ENCODE measurements at regions of chr16 and their contacts with region 1.

Region 1: DNA sequence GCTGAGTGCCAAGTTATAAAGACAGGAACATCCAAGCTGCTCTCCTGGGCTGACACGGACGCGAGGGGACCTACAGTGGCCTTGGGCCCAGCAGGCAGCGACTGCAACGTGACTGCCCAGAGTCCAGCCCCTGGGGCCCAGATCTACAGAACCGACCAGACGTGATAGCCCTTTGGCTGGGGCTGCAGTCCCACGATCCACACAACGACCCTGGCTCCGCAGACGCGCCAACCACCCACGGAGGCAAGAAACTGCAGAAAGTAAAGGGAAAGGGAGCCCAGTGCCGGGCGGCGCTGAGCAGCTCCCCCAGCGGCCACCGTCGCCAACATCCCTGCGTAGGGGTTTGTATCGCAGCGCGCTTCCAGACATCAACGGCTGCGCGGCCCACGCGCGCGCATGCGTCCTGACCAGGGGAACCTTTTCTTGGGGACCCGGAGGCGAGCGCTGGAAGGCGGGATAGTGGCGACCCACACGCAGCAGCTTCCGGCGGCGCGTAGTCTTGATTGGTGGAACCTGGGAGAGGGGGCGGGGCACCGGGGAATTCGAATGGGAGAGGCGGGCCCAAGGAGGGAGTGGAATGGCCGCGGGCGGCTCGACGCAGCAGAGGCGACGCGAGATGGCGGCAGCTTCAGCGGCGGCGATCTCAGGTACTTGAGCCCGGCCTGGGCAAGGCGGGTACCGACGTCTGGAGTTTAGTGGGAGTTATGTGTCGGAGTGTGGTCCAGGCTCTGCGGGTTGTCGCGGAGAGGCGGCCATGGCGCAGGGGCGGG is at the start of gene KIF22:
- DNase-seq: peak; percentile 99 to 100 (median 100)
- H3K4me3 ChIP-seq: peak within 1 kb of the TSS; percentile 90 to 98
- H3K4me3 Mint-ChIP-seq: peak within 1 kb of the TSS; percentile 97 to 100 (median 99)
- H3K27ac ChIP-seq: peak within 1 kb of the TSS; percentile 80
- H3K27ac Mint-ChIP-seq: peak within 1 kb of the TSS; percentile 96 to 99 (median 98)
- H3K4me1 ChIP-seq: peaks cover 43% of the 10 kb centered on the region
- H3K4me1 Mint-ChIP-seq: peaks cover 27 to 58% (median 43%) of the 10 kb centered on the region in 4 donors
- H3K27me3 ChIP-seq: no peaks in the 10 kb centered on the region
- H3K27me3 Mint-ChIP-seq: no peaks in the 10 kb centered on the region
- total RNA-seq, gene KIF22: 89.4 to 98.6 TPM

Region 2: GRCh38 chr16:29729116-29729521 is 61.2 kb before region 1 on chr16:
- CTCF ChIA-PET with region 1: interaction called, 53 read pairs
- POLR2A ChIA-PET with region 1: interaction called, 14 read pairs
- intact Hi-C with region 1: no loop called
- DNase-seq: no peak
- H3K4me3 ChIP-seq: no peak overlapping the region
- H3K4me3 Mint-ChIP-seq: peak overlapping the region in 1 of 8 donors; percentile 20
- H3K27ac ChIP-seq: no peak overlapping the region
- H3K27ac Mint-ChIP-seq: peak overlapping the region in 3 of 7 donors; percentile 24 to 66 (median 36)
- H3K4me1 ChIP-seq: peaks cover 14% of the 10 kb centered on the region
- H3K4me1 Mint-ChIP-seq: peaks cover 17 to 32% (median 21%) of the 10 kb centered on the region in 4 donors
- H3K27me3 ChIP-seq: no peaks in the 10 kb centered on the region
- H3K27me3 Mint-ChIP-seq: no peaks in the 10 kb centered on the region

Region 3: DNA sequence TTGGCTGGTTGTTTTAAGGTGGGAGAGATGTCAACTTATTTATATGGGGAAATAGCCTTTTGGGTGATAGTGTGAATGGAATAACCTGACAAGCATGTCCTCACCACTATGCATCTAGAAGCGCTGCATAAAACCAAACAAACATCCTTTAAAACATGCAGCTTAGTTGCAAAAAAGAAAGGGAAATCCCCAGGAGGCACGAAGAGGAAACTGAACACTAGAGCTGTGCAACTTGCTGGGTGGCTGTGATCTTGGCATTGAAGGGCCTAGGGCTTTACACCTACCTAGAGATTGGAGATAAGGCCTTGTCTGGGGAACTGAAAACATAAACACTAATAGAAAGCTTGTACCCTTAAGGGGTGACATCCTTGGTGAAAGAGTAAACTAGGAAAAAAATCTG is 51.9 kb before region 1 on chr16:
- CTCF ChIA-PET with region 1: interaction called, 53 read pairs
- POLR2A ChIA-PET with region 1: interaction called, 183 read pairs
- intact Hi-C with region 1: no loop called
- DNase-seq: peak; percentile 80 to 87 (median 84)
- H3K4me3 ChIP-seq: no peak overlapping the region
- H3K4me3 Mint-ChIP-seq: peak overlapping the region; percentile 3 to 73 (median 68)
- H3K27ac ChIP-seq: peak overlapping the region; percentile 62
- H3K27ac Mint-ChIP-seq: peak overlapping the region; percentile 90 to 100 (median 94)
- H3K4me1 ChIP-seq: peaks cover 81% of the 10 kb centered on the region
- H3K4me1 Mint-ChIP-seq: peaks cover 63 to 91% (median 74%) of the 10 kb centered on the region in 4 donors
- H3K27me3 ChIP-seq: no peaks in the 10 kb centered on the region
- H3K27me3 Mint-ChIP-seq: no peaks in the 10 kb centered on the region

Region 4: GRCh38 chr16:29745853-29746345 is 44.5 kb before region 1 on chr16 and contains the start of gene C16orf54:
- CTCF ChIA-PET with region 1: interaction called, 39 read pairs
- POLR2A ChIA-PET with region 1: interaction called, 183 read pairs
- intact Hi-C with region 1: loop called (anchors 1 kb)
- DNase-seq: peak; percentile 98 to 99 (median 98)
- H3K4me3 ChIP-seq: peak within 1 kb of the TSS; percentile 67 to 93
- H3K4me3 Mint-ChIP-seq: peak within 1 kb of the TSS; percentile 96 to 100 (median 99)
- H3K27ac ChIP-seq: peak within 1 kb of the TSS; percentile 94
- H3K27ac Mint-ChIP-seq: peak within 1 kb of the TSS; percentile 98 to 100 (median 100)
- H3K4me1 ChIP-seq: peaks cover 78% of the 10 kb centered on the region
- H3K4me1 Mint-ChIP-seq: peaks cover 39 to 79% (median 54%) of the 10 kb centered on the region in 4 donors
- H3K27me3 ChIP-seq: no peaks in the 10 kb centered on the region
- H3K27me3 Mint-ChIP-seq: peaks cover 0 to 2% of the 10 kb centered on the region in 2 donors
- total RNA-seq, gene C16orf54: 139 to 143 TPM

Region 5: DNA sequence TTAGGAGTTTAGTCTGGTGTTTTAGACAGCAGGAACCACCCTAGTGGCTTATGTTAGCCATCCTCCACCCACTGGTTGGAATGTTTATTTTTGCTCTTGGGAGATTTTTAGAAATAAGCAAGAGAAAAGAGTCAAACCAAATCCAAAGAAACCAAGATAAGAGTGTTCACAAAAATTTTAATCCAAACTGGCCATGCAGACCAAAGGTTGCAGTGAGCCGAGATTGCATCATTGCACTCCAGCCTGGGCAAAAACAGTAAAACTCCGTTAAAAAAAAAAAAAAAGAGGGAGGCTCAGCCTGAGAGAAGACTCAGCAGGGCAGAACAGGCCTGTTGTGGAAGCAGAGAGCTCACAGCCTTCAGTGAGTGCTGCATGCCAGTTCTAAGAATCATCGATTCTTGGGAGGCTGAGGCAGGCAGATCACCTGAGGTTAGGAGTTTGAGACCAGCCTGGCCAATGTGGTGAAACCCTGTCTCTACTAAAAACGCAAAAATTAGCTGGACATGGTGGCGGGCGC is 32.4 kb before region 1 on chr16:
- CTCF ChIA-PET with region 1: interaction called, 35 read pairs
- POLR2A ChIA-PET with region 1: interaction called, 28 read pairs
- intact Hi-C with region 1: no loop called
- DNase-seq: no peak
- H3K4me3 ChIP-seq: no peak overlapping the region
- H3K4me3 Mint-ChIP-seq: no peak overlapping the region
- H3K27ac ChIP-seq: no peak overlapping the region
- H3K27ac Mint-ChIP-seq: peak overlapping the region in 3 of 7 donors; percentile 6 to 75 (median 46)
- H3K4me1 ChIP-seq: peaks cover 23% of the 10 kb centered on the region
- H3K4me1 Mint-ChIP-seq: peaks cover 19 to 43% (median 27%) of the 10 kb centered on the region in 4 donors
- H3K27me3 ChIP-seq: no peaks in the 10 kb centered on the region
- H3K27me3 Mint-ChIP-seq: no peaks in the 10 kb centered on the region

Region 6: DNA sequence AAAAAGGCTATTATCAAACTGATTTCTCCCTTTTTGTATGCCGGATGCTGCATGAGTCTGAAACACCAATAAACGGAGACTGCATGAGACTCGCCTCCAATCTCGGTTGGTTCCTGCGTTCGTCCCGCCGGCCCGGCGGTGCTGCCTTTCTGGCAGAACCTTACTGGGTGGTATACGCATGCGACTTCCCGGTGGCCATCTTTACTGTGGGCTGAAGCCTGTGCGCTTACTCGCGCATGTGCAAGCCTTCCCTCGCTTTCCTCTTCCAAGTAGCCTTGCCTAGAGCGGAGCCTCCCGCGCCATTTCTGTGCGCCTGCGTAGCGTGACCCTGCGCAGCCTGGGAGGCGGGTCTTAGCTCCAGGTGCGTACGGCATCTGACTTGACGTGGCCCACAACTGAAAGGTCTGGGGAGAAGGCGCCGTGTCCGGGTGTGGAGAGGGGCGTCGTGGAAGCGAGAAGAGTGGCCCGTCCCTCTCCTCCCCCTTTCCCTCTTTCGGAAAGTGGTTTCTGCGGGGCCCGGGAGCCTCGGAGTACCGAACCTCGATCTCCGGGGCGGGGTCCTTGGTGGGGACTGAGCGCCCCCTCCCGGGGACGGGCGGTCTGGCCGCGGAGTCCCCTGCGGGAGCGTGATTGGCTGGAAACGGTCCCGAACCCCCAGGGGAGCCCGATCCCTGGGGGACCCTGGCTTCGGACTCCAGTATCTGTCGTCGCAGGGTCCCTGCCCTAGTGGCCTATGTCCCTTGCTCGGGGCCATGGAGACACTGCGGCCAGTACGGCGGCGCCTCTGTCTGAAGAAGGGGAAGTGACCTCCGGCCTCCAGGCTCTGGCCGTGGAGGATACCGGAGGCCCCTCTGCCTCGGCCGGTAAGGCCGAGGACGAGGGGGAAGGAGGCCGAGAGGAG is 25.7 kb after region 1 on chr16 and contains the start of gene PAGR1:
- CTCF ChIA-PET with region 1: interaction called, 20 read pairs
- POLR2A ChIA-PET with region 1: interaction called, 522 read pairs
- intact Hi-C with region 1: loop called (anchors 1 kb)
- DNase-seq: peak; percentile 99 to 100 (median 99)
- H3K4me3 ChIP-seq: peak within 1 kb of the TSS; percentile 91 to 95
- H3K4me3 Mint-ChIP-seq: peak within 1 kb of the TSS; percentile 95 to 99 (median 98)
- H3K27ac ChIP-seq: peak within 1 kb of the TSS; percentile 77
- H3K27ac Mint-ChIP-seq: peak within 1 kb of the TSS; percentile 94 to 100 (median 98)
- H3K4me1 ChIP-seq: peaks cover 66% of the 10 kb centered on the region
- H3K4me1 Mint-ChIP-seq: peaks cover 30 to 87% (median 56%) of the 10 kb centered on the region in 4 donors
- H3K27me3 ChIP-seq: no peaks in the 10 kb centered on the region
- H3K27me3 Mint-ChIP-seq: peaks cover 0 to 2% of the 10 kb centered on the region in 2 donors
- total RNA-seq, gene PAGR1: 43.7 to 44.9 TPM